Right cardiac atrium (tissue), 5 donors: ENCODE measurements at regions of chr2 and their contacts with region 1.

Region 1: GRCh38 chr2:42117923-42118753 is 51.0 kb upstream of the EML4 start:
- DNase-seq: no peak
- ATAC-seq: peak; percentile 72 to 90
- H3K4me3 ChIP-seq: no peak overlapping the region
- H3K27ac ChIP-seq: no peak overlapping the region
- H3K4me1 ChIP-seq: peaks cover 3% of the 10 kb centered on the region
- H3K27me3 ChIP-seq: no peaks in the 10 kb centered on the region

Region 2: DNA sequence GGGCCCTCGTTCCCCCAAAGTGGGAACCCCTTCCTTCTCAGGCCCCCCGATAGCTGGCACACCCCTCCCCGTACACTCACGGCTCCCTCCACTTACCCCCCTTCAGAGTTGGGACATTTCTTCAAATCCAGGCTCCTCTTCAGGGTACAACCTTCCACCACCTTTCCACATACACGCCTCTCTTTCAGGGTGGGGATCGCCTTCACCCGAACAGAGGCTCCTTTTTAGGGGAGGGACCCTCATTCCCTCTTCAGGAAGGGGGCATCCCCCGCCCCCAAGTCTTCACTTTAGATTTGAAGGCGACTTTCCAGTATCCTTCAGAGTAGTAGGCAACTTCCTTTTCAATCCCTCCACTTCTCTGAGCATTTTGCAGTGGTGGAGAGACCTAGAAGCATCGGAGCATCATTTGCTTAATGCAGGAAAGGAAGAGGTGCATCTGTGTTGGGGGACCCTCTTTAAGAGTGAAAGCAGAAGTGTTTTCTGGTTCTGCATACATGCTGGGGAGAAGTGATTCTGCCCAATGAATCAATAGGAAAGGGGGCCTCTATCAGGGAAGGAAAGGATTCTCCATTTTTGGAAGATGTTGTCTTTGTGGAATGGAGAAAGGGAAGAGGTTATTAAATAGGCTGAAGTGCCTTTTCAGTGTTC is 51.9 kb after region 1 on chr2:
- intact Hi-C with region 1: loop called in 1 of 4 experiments (anchors 10 kb)
- DNase-seq: no peak
- ATAC-seq: peak in 1 of 2 donors; percentile 2
- H3K4me3 ChIP-seq: peak overlapping the region; percentile 71
- H3K27ac ChIP-seq: no peak overlapping the region
- H3K4me1 ChIP-seq: no peaks in the 10 kb centered on the region
- H3K27me3 ChIP-seq: no peaks in the 10 kb centered on the region